ENCODE measurements at regions of chr11 and their contacts with region 1.

Region 1: DNA sequence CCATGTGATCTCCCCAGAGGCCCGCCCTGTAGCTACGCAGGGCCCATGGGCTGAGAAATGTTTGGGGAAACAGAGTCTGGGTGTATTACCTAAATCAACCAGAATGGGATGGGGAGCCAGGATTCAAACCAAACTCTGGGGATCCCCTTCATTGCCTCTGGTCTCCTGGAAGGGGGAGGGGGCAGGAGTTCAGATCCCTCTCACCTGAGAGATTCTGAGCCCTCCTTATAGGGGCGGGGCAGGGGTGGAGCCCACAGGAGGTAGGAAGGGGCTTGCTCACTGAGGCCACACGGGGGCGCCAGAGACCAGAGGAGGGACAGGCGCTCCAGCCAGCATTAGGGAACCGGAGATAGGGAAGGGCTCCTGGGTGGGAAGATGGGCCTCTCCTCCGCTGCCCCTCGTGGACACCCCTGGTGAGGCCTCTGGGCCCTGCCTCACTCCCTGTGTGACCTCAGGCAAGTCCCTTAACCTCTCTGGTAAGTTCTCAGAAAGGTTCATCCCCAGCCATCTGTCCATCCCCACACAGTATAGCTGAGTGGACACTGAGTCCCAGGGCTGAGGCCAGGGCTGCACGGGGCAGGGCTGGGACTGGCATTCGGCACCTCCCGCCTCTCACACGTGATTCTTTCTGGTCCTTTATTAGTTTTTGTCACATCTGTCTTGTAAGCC is 2.7 kb upstream of the CDC42BPG start:
- DNase-seq: peak; percentile 92 to 96
- ATAC-seq: peak; percentile 52

Region 2: GRCh38 chr11:64887757-64888405 is 40.7 kb after region 1 on chr11:
- intact Hi-C with region 1: loop called (anchors 2 to 5 kb)
- DNase-seq: peak; percentile 84 to 91
- ATAC-seq: peak; percentile 43

Region 3: GRCh38 chr11:64894070-64894796 is 47.1 kb after region 1 on chr11:
- intact Hi-C with region 1: loop called (anchors 2 to 5 kb)
- DNase-seq: peak; percentile 91 to 99
- ATAC-seq: peak; percentile 50